Left cardiac atrium (tissue), 4 donors: ENCODE measurements at regions of chr9 and their contacts with region 1.

Region 1: GRCh38 chr9:127347831-127348779 is 48.9 kb upstream of the SLC2A8 start:
- DNase-seq: no peak
- ATAC-seq: peak; percentile 61 to 91

Region 2: GRCh38 chr9:127214421-127215267 is 133.5 kb before region 1 on chr9:
- intact Hi-C with region 1: loop called in 1 of 2 experiments (anchors 2 kb)
- DNase-seq: peak; percentile 58
- ATAC-seq: peak; percentile 58 to 66

Region 3: GRCh38 chr9:127311239-127311741 is 36.8 kb before region 1 on chr9:
- intact Hi-C with region 1: loop called in 1 of 2 experiments (anchors 5 kb)
- DNase-seq: no peak
- ATAC-seq: peak in 1 of 2 donors; percentile 45

Region 4: DNA sequence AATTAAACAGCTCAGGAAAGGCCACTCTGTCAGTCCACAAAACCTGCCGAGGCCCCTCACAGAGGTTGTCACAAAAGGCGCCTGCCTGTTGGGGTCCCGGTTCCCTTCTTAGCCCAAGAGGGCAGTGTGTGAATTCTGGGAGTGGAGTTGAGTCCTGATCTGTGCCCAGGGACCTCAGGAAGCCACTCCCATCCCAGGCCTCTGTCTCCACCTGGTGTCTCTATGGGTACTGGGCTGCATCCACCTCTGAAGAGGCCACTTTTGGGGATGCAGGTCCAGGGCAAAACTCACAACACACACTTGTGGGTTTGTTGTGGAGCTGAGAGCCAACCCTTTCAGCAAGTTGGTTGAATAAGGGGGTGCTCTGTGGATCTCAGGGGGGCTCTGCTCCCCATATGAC is 189.7 kb after region 1 on chr9:
- intact Hi-C with region 1: no loop called
- DNase-seq: no peak
- ATAC-seq: no peak